ENCODE measurements at regions of chr2 and their contacts with region 1.

Region 1: GRCh38 chr2:159904127-159904958 is 106.3 kb upstream of the CD302 start:
- DNase-seq: peak; percentile 70 to 85 (median 83)
- ATAC-seq: peak; percentile 91
- H3K4me3 ChIP-seq: peak within 1 kb of the TSS; percentile 95
- H3K4me3 Mint-ChIP-seq: peak within 1 kb of the TSS; percentile 93 to 100 (median 98)
- H3K27ac ChIP-seq: peak within 1 kb of the TSS; percentile 87
- H3K27ac Mint-ChIP-seq: peak within 1 kb of the TSS; percentile 96 to 100 (median 98)
- H3K4me1 ChIP-seq: peaks cover 3 to 8% of the 10 kb centered on the region in 2 donors
- H3K4me1 Mint-ChIP-seq: peaks cover 24 to 52% (median 41%) of the 10 kb centered on the region in 7 donors
- H3K27me3 ChIP-seq: no peaks in the 10 kb centered on the region
- H3K27me3 Mint-ChIP-seq: peaks cover 0 to 3% (median 0%) of the 10 kb centered on the region in 5 donors

Region 2: GRCh38 chr2:158994920-158995676 is 909.2 kb before region 1 on chr2:
- CTCF ChIA-PET with region 1: no interaction called
- POLR2A ChIA-PET with region 1: no interaction called
- intact Hi-C with region 1: no loop called
- DNase-seq: no peak
- ATAC-seq: no peak
- H3K4me3 ChIP-seq: no peak overlapping the region
- H3K4me3 Mint-ChIP-seq: no peak overlapping the region
- H3K27ac ChIP-seq: no peak overlapping the region
- H3K27ac Mint-ChIP-seq: no peak overlapping the region
- H3K4me1 ChIP-seq: no peaks in the 10 kb centered on the region
- H3K4me1 Mint-ChIP-seq: peaks cover 0 to 5% (median 0%) of the 10 kb centered on the region in 7 donors
- H3K27me3 ChIP-seq: no peaks in the 10 kb centered on the region
- H3K27me3 Mint-ChIP-seq: peaks cover 0 to 19% (median 0%) of the 10 kb centered on the region in 5 donors

Region 3: DNA sequence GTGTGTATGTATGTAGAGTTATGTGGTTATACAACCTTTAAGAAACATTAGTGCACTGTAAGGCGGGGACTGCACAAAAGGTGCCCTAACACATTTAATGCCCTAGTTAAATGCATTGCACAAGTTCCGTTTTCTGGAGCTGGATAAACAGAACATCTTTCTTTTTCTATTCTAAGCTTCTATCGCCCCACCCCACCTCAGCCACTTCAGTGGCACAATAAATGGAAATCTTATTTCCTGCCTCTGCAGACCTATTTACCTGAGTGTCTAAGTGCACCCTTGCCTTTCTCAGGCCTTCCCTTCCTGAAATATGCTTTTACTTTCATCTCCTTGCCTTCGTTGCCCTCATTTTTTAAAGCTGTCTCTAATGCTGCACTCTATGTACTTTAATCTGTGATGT is 812.4 kb before region 1 on chr2:
- CTCF ChIA-PET with region 1: no interaction called
- POLR2A ChIA-PET with region 1: no interaction called
- intact Hi-C with region 1: loop called in 1 of 2 experiments (anchors 2 kb)
- DNase-seq: peak in 7 of 9 donors; percentile 14 to 73 (median 61)
- ATAC-seq: peak; percentile 76
- H3K4me3 ChIP-seq: no peak overlapping the region
- H3K4me3 Mint-ChIP-seq: peak overlapping the region; percentile 16 to 86 (median 52)
- H3K27ac ChIP-seq: no peak overlapping the region
- H3K27ac Mint-ChIP-seq: peak overlapping the region; percentile 1 to 88 (median 80)
- H3K4me1 ChIP-seq: peaks cover 4 to 31% of the 10 kb centered on the region in 2 donors
- H3K4me1 Mint-ChIP-seq: peaks cover 29 to 78% (median 67%) of the 10 kb centered on the region in 7 donors
- H3K27me3 ChIP-seq: no peaks in the 10 kb centered on the region
- H3K27me3 Mint-ChIP-seq: no peaks in the 10 kb centered on the region

Region 4: GRCh38 chr2:159256159-159256558 is 648.2 kb before region 1 on chr2:
- CTCF ChIA-PET with region 1: no interaction called
- POLR2A ChIA-PET with region 1: no interaction called
- intact Hi-C with region 1: no loop called
- DNase-seq: no peak
- ATAC-seq: no peak
- H3K4me3 ChIP-seq: no peak overlapping the region
- H3K4me3 Mint-ChIP-seq: no peak overlapping the region
- H3K27ac ChIP-seq: no peak overlapping the region
- H3K27ac Mint-ChIP-seq: no peak overlapping the region
- H3K4me1 ChIP-seq: no peaks in the 10 kb centered on the region
- H3K4me1 Mint-ChIP-seq: no peaks in the 10 kb centered on the region
- H3K27me3 ChIP-seq: no peaks in the 10 kb centered on the region
- H3K27me3 Mint-ChIP-seq: no peaks in the 10 kb centered on the region

Region 5: GRCh38 chr2:159516241-159516766 is 388.0 kb before region 1 on chr2:
- CTCF ChIA-PET with region 1: interaction called, 3 read pairs
- POLR2A ChIA-PET with region 1: no interaction called
- intact Hi-C with region 1: loop called in 1 of 2 experiments (anchors 10 kb)
- DNase-seq: peak in 7 of 9 donors; percentile 46 to 74 (median 55)
- ATAC-seq: peak; percentile 97
- H3K4me3 ChIP-seq: peak overlapping the region; percentile 71
- H3K4me3 Mint-ChIP-seq: peak overlapping the region; percentile 77 to 94 (median 86)
- H3K27ac ChIP-seq: peak overlapping the region; percentile 71
- H3K27ac Mint-ChIP-seq: peak overlapping the region; percentile 58 to 96 (median 93)
- H3K4me1 ChIP-seq: peaks cover 11 to 27% of the 10 kb centered on the region in 2 donors
- H3K4me1 Mint-ChIP-seq: peaks cover 9 to 40% (median 28%) of the 10 kb centered on the region in 7 donors
- H3K27me3 ChIP-seq: no peaks in the 10 kb centered on the region
- H3K27me3 Mint-ChIP-seq: no peaks in the 10 kb centered on the region

Region 6: DNA sequence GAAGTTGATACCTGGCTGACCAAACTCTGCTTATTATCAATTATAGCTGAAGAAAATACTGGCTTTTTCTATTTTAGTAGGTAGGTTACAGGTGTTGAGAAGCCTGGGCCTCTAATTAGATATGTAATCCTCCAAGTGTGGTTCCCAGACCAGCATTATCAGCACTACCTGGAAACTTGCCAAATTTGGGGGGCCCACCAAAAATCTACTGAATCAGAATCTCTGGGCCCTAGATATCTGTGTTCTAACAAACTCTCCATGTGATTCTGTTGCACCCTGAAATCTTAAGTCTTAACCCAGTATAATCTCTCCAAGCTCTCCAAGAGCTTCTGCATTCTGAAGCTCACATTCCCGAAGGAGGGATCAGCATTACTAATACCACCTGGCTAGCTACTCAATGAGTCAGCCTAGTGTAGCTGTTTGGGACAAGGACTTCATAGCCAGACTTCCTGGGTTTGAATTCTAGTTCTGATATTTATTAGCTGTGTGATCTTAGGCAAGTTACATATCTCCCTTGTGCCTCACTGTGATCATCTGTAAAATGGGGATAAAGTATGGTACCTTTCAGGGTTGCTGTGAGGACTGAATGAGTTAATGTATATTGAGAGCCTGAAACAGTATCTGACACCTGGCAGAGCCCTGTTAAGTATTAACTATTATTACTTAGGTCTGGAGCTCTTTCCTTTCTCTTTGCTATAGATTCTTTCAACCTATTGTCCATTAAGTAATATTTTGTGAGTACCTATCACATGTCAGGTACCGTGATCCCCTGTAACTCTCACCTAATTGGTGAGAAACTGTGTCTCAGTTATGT is 12.2 kb before region 1 on chr2:
- CTCF ChIA-PET with region 1: no interaction called
- POLR2A ChIA-PET with region 1: interaction called, 3 read pairs
- intact Hi-C with region 1: loop called in 1 of 2 experiments (anchors 2 kb)
- DNase-seq: no peak
- ATAC-seq: no peak
- H3K4me3 ChIP-seq: no peak overlapping the region
- H3K4me3 Mint-ChIP-seq: no peak overlapping the region
- H3K27ac ChIP-seq: no peak overlapping the region
- H3K27ac Mint-ChIP-seq: peak overlapping the region in 1 of 9 donors; percentile 22
- H3K4me1 ChIP-seq: no peaks in the 10 kb centered on the region
- H3K4me1 Mint-ChIP-seq: peaks cover 19 to 60% (median 39%) of the 10 kb centered on the region in 7 donors
- H3K27me3 ChIP-seq: no peaks in the 10 kb centered on the region
- H3K27me3 Mint-ChIP-seq: no peaks in the 10 kb centered on the region

Region 7: DNA sequence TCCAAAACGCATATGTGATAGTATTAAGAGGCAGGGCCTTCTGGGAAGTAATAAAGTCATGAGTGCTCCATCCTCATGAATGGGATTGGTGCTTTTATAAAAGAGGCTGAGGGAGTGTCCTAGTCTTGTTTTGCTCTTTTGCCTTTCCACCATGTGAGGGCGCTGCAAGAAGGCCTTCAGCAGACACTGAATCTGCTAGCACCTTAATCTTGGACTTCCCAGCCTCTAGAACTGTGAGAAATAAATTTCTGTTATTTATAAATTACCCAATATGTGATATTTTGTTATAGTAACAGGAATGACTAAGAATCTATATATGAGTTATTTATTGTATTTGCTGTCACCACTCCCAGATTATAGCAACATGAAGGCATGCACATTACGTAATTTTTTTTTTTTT is 94.6 kb after region 1 on chr2:
- CTCF ChIA-PET with region 1: no interaction called
- POLR2A ChIA-PET with region 1: no interaction called
- intact Hi-C with region 1: no loop called
- DNase-seq: no peak
- ATAC-seq: no peak
- H3K4me3 ChIP-seq: no peak overlapping the region
- H3K4me3 Mint-ChIP-seq: no peak overlapping the region
- H3K27ac ChIP-seq: no peak overlapping the region
- H3K27ac Mint-ChIP-seq: no peak overlapping the region
- H3K4me1 ChIP-seq: no peaks in the 10 kb centered on the region
- H3K4me1 Mint-ChIP-seq: no peaks in the 10 kb centered on the region
- H3K27me3 ChIP-seq: no peaks in the 10 kb centered on the region
- H3K27me3 Mint-ChIP-seq: peaks cover 12 to 37% (median 29%) of the 10 kb centered on the region in 5 donors

Region 8: GRCh38 chr2:160224060-160224459 is 319.7 kb after region 1 on chr2:
- CTCF ChIA-PET with region 1: no interaction called
- POLR2A ChIA-PET with region 1: no interaction called
- intact Hi-C with region 1: no loop called
- DNase-seq: peak in 1 of 9 donors; percentile 34
- ATAC-seq: no peak
- H3K4me3 ChIP-seq: no peak overlapping the region
- H3K4me3 Mint-ChIP-seq: peak overlapping the region in 1 of 10 donors; percentile 50
- H3K27ac ChIP-seq: no peak overlapping the region
- H3K27ac Mint-ChIP-seq: peak overlapping the region in 3 of 9 donors; percentile 30 to 68 (median 67)
- H3K4me1 ChIP-seq: no peaks in the 10 kb centered on the region
- H3K4me1 Mint-ChIP-seq: peaks cover 10 to 43% (median 15%) of the 10 kb centered on the region in 7 donors
- H3K27me3 ChIP-seq: no peaks in the 10 kb centered on the region
- H3K27me3 Mint-ChIP-seq: no peaks in the 10 kb centered on the region

Region 9: GRCh38 chr2:160269803-160270570 is 365.6 kb after region 1 on chr2:
- CTCF ChIA-PET with region 1: no interaction called
- POLR2A ChIA-PET with region 1: no interaction called
- intact Hi-C with region 1: loop called in 1 of 2 experiments (anchors 10 kb)
- DNase-seq: peak; percentile 43 to 68 (median 63)
- ATAC-seq: peak; percentile 89
- H3K4me3 ChIP-seq: peak overlapping the region; percentile 59
- H3K4me3 Mint-ChIP-seq: peak overlapping the region; percentile 75 to 95 (median 88)
- H3K27ac ChIP-seq: peak overlapping the region; percentile 66
- H3K27ac Mint-ChIP-seq: peak overlapping the region; percentile 42 to 97 (median 89)
- H3K4me1 ChIP-seq: peaks cover 5 to 7% of the 10 kb centered on the region in 2 donors
- H3K4me1 Mint-ChIP-seq: peaks cover 9 to 44% (median 32%) of the 10 kb centered on the region in 7 donors
- H3K27me3 ChIP-seq: no peaks in the 10 kb centered on the region
- H3K27me3 Mint-ChIP-seq: peaks cover 0 to 10% (median 0%) of the 10 kb centered on the region in 5 donors